Endothelial cell of umbilical vein (primary cell): ENCODE measurements at regions of chr1 and their contacts with region 1.

Region 1: GRCh38 chr1:165898837-165899236 is 71.4 kb downstream of the UCK2 start:
- DNase-seq: peak; percentile 70
- H3K4me3 ChIP-seq: no peak overlapping the region
- H3K27ac ChIP-seq: peak overlapping the region; percentile 98
- H3K4me1 ChIP-seq: peaks cover 83% of the 10 kb centered on the region
- H3K27me3 ChIP-seq: no peaks in the 10 kb centered on the region
- CTCF ChIP-seq: no peak
- POLR2A ChIP-seq: no peak

Region 2: GRCh38 chr1:165679282-165680036 is 219.4 kb before region 1 on chr1:
- CTCF ChIA-PET with region 1: no interaction called
- POLR2A ChIA-PET with region 1: no interaction called
- dilution Hi-C with region 1: no loop called
- intact Hi-C with region 1: no loop called
- DNase-seq: no peak
- H3K4me3 ChIP-seq: no peak overlapping the region
- H3K27ac ChIP-seq: no peak overlapping the region
- H3K4me1 ChIP-seq: peaks cover 11% of the 10 kb centered on the region
- H3K27me3 ChIP-seq: no peaks in the 10 kb centered on the region
- CTCF ChIP-seq: no peak
- POLR2A ChIP-seq: no peak

Region 3: GRCh38 chr1:165836664-165837482 is 62.0 kb before region 1 on chr1:
- CTCF ChIA-PET with region 1: interaction called, 3 read pairs
- POLR2A ChIA-PET with region 1: no interaction called
- dilution Hi-C with region 1: no loop called
- intact Hi-C with region 1: loop called (anchors 2 kb)
- DNase-seq: no peak
- H3K4me3 ChIP-seq: no peak overlapping the region
- H3K27ac ChIP-seq: no peak overlapping the region
- H3K4me1 ChIP-seq: peaks cover 19% of the 10 kb centered on the region
- H3K27me3 ChIP-seq: no peaks in the 10 kb centered on the region
- CTCF ChIP-seq: no peak
- POLR2A ChIP-seq: no peak

Region 4: GRCh38 chr1:165884690-165885304 is 14.0 kb before region 1 on chr1:
- CTCF ChIA-PET with region 1: interaction called, 43 read pairs
- POLR2A ChIA-PET with region 1: interaction called, 12 read pairs
- dilution Hi-C with region 1: no loop called
- intact Hi-C with region 1: loop called (anchors 1 kb)
- DNase-seq: peak; percentile 70
- H3K4me3 ChIP-seq: no peak overlapping the region
- H3K27ac ChIP-seq: peak overlapping the region; percentile 83
- H3K4me1 ChIP-seq: peaks cover 26% of the 10 kb centered on the region
- H3K27me3 ChIP-seq: no peaks in the 10 kb centered on the region
- CTCF ChIP-seq: no peak
- POLR2A ChIP-seq: no peak